ENCODE measurements at regions of chr7 and their contacts with region 1.

Region 1: GRCh38 chr7:30459591-30460257 is 18.9 kb downstream of the NOD1 start:
- DNase-seq: no peak
- ATAC-seq: no peak
- H3K4me3 ChIP-seq: no peak overlapping the region
- H3K4me3 Mint-ChIP-seq: no peak overlapping the region
- H3K27ac ChIP-seq: no peak overlapping the region
- H3K27ac Mint-ChIP-seq: no peak overlapping the region
- H3K4me1 ChIP-seq: peaks cover 27 to 28% of the 10 kb centered on the region in 2 donors
- H3K4me1 Mint-ChIP-seq: peaks cover 32% of the 10 kb centered on the region
- H3K27me3 ChIP-seq: no peaks in the 10 kb centered on the region
- H3K27me3 Mint-ChIP-seq: no peaks in the 10 kb centered on the region
- CTCF ChIP-seq: no peak

Region 2: GRCh38 chr7:29924684-29925083 is 535.0 kb before region 1 on chr7:
- CTCF ChIA-PET with region 1: no interaction called
- POLR2A ChIA-PET with region 1: no interaction called
- intact Hi-C with region 1: no loop called
- DNase-seq: no peak
- ATAC-seq: no peak
- H3K4me3 ChIP-seq: no peak overlapping the region
- H3K4me3 Mint-ChIP-seq: no peak overlapping the region
- H3K27ac ChIP-seq: no peak overlapping the region
- H3K27ac Mint-ChIP-seq: no peak overlapping the region
- H3K4me1 ChIP-seq: no peaks in the 10 kb centered on the region
- H3K4me1 Mint-ChIP-seq: no peaks in the 10 kb centered on the region
- H3K27me3 ChIP-seq: no peaks in the 10 kb centered on the region
- H3K27me3 Mint-ChIP-seq: no peaks in the 10 kb centered on the region
- CTCF ChIP-seq: no peak

Region 3: DNA sequence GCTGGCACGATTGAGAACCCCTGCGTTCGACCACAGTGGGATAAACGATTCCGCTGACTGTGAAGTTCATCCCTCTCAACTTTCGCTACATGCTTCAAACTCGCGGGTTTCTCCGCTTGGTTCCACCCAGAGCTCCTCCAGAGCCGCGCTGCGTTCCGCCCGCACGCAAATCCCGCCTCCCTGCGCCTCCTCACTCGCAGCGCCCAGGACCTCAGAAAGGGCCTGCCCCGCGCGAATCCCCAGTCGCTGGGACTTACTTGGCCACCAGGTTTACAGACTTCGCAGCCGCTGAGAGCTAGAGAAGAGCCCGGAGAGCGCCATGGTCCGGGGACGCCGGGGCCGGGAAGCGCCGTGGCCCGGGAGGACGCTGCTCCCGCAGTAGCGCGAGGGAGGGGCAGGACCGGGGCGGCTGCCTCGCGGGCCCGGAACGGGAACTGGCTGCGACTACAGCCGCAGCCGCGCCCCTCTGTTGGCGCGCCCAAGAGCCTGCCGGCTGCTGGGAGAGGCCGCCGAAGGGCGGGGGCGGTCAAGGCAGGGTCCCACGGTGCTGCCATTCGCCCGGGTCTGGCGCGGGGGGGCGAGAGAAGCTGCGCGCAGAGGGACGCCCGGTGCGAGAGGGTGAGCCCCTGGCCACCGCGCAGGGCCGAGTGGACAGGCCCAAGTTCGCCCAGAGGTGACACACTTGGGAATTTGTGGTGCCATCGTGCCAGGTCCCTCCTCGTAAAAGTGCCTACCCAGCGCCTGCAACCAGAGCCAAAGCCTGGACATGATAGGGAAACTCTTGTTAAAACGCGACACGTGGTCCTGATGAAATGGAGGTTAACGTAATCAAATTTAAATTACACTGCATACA is 18.9 kb after region 1 on chr7 and contains the start of gene NOD1:
- CTCF ChIA-PET with region 1: interaction called, 6 read pairs
- POLR2A ChIA-PET with region 1: interaction called, 6 read pairs
- intact Hi-C with region 1: loop called (anchors 1 kb)
- DNase-seq: peak; percentile 74
- ATAC-seq: peak; percentile 89
- H3K4me3 ChIP-seq: peak within 1 kb of the TSS; percentile 62 to 87 (median 84)
- H3K4me3 Mint-ChIP-seq: peak within 1 kb of the TSS; percentile 93
- H3K27ac ChIP-seq: peak within 1 kb of the TSS; percentile 59 to 66
- H3K27ac Mint-ChIP-seq: peak within 1 kb of the TSS; percentile 88
- H3K4me1 ChIP-seq: peaks cover 46 to 47% of the 10 kb centered on the region in 2 donors
- H3K4me1 Mint-ChIP-seq: peaks cover 58% of the 10 kb centered on the region
- H3K27me3 ChIP-seq: no peaks in the 10 kb centered on the region
- H3K27me3 Mint-ChIP-seq: no peaks in the 10 kb centered on the region
- CTCF ChIP-seq: no peak
- total RNA-seq, gene NOD1: 28.8 and 31.2 TPM in 2 replicates

Measured in B cell (primary cell).